ENCODE measurements at regions of chr11 and their contacts with region 1.

Region 1: GRCh38 chr11:102390667-102391465 is 43.9 kb downstream of the BIRC2 start:
- DNase-seq: peak in 9 of 10 donors; percentile 33 to 94 (median 75)

Region 2: DNA sequence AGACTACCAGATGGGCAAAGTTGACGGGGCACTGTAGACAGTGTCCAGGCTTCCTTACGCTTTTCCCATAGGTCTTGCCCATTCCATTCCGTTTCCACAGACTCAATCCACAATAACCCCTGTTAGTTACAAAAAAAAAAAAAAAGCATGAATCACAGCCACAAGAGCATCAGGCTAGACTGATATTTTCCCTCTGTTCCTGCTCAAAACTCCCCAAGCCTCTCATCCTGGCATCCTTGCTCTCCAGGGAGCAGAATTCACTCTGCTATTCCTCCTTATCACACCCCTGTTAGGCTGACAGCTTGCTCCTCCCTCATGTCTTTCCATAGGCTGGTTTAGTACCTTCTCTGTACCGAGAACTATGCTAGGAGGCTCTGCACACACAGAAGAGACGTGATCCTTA is 19.5 kb after region 1 on chr11:
- intact Hi-C with region 1: no loop called
- DNase-seq: no peak

Region 3: DNA sequence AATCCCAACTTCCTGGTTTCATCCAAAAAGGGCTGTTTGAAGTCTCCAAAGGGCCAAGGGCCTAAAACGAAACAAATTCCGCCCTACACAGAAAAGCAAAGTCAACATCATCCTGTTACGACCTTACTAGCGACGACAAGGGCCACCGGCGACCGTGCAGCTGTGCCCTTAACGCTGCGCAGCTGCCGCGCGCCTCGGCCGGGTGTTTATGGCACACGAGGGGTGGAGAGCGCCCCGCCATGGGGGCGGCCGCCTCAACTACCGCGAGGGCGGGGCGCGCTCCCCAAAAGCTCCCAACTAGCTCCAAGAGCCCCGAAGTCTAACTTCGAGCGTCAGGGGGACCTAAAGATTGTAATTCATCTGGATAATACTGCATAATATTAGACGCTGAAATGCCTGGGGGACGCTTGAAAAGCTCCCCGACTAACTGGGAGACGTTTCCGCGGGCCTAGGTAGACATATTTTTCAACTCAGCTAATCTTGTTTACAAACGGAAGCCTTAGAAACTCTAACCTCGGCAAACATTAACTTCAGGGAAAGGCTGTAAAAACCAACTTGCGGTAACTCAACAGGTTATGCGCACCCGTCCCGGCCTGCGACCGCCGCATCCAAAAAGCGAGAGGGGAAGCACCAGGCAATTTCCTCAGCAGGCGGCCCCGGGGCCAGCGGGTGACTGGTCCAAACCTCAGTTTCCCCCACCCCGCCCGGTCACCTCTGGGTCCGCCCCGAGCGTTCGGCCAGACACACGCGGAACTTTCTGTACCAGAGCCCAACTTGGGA is 61.0 kb after region 1 on chr11:
- intact Hi-C with region 1: loop called (anchors 1 kb)
- DNase-seq: peak; percentile 37 to 94 (median 62)

Measured in posterior cingulate gyrus (tissue), 11 donors.